H1 (cell line): ENCODE measurements at regions of chr7 and their contacts with region 1.

Region 1: GRCh38 chr7:74173866-74174605 is at the start of gene EIF4H:
- DNase-seq: peak; percentile 84 to 100
- H3K4me3 ChIP-seq: peak within 1 kb of the TSS; percentile 67 to 97 (median 80)
- H3K27ac ChIP-seq: peak within 1 kb of the TSS; percentile 94
- H3K4me1 ChIP-seq: peaks cover 2 to 14% (median 6%) of the 10 kb centered on the region in 4 experiments; a peak in 6 of 7 replicates
- H3K27me3 ChIP-seq: no peaks in the 10 kb centered on the region
- CTCF ChIP-seq: no peak; a peak in 1 of 4 replicates
- EP300 ChIP-seq: no peak
- POLR2A ChIP-seq: peak; percentile 91 to 95
- RAD21 ChIP-seq: no peak
- total RNA-seq, gene EIF4H: 359 and 382 TPM in 2 replicates

Region 2: DNA sequence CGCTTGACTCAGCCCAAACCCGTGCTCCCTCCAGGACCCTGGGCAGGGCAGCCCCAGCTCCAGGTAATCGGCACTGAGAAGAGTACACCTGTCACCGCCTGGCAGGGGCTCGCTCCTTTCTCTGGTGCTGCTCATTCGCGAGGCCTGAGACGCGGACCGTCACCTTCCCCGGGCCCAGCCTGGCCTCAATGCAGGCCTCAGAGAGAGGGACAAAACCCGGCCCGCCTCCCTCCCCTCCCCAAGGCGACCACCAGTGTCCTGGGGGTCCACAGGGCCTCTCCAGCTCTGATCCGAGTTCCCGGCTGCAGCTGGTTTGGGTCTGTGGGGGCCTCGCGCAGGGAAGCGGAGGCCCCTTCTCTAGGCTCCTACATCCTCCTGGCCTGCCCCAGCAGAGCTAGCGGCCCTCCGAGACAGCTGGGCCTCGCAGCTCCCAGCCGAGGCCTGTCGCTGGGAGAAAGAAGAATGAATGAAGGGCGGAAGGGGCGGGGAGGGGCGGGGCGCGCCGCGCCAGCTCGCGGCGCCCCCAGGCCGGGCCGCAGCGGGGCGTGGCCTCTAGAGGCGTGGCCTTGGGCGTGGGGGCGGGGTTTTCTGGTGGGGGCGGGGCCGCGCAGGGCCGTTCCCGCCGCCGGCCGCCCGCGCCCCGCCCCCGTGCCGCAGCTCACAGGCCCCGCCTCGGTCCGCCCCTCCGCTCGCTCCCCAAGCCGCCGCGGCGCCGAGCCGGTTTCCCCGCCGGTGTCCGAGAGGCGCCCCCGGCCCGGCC is 90.7 kb before region 1 on chr7 and contains the start of gene LIMK1:
- CTCF ChIA-PET with region 1: interaction called, 3 read pairs
- POLR2A ChIA-PET with region 1: interaction called, 18 read pairs
- DNase-seq: peak in 1 of 2 experiments; percentile 86
- H3K4me3 ChIP-seq: peak within 1 kb of the TSS; percentile 59 to 90 (median 64)
- H3K27ac ChIP-seq: peak within 1 kb of the TSS; percentile 3; the same call in 1 of the 2 replicates
- H3K4me1 ChIP-seq: peaks cover 0 to 20% (median 12%) of the 10 kb centered on the region in 4 experiments; a peak in 6 of 7 replicates
- H3K27me3 ChIP-seq: no peaks in the 10 kb centered on the region
- CTCF ChIP-seq: no peak
- EP300 ChIP-seq: no peak
- POLR2A ChIP-seq: peak in 1 of 2 experiments; percentile 44; a peak in 1 of 3 replicates
- RAD21 ChIP-seq: no peak
- total RNA-seq, gene LIMK1: 92.1 and 93.5 TPM in 2 replicates

Region 3: GRCh38 chr7:74141705-74142104 is 32.3 kb before region 1 on chr7:
- CTCF ChIA-PET with region 1: interaction called, 3 read pairs
- POLR2A ChIA-PET with region 1: interaction called, 24 read pairs
- DNase-seq: no peak
- H3K4me3 ChIP-seq: no peak overlapping the region
- H3K27ac ChIP-seq: no peak overlapping the region
- H3K4me1 ChIP-seq: peaks cover 0 to 10% (median 6%) of the 10 kb centered on the region in 4 experiments; a peak in 6 of 7 replicates
- H3K27me3 ChIP-seq: no peaks in the 10 kb centered on the region
- CTCF ChIP-seq: no peak
- EP300 ChIP-seq: no peak
- POLR2A ChIP-seq: no peak
- RAD21 ChIP-seq: no peak

Region 4: DNA sequence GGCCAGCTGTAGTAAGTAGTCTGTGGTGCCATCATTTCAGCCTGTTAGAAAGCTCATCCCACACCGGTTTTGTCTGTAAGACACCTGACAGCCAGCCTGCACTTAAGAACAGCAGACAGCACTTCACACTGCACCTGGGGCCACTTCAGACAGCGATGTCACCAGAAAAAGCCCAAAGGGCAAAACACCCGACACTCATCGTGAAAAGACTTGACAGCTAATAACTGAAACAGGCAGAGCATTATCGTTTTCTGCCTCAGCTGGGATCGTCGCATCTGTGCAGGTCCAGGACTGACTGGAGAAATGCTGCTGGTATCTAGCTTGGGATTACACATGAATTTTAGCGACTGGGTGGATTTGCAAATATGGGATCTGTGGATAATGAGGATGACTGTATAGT is 19.0 kb after region 1 on chr7:
- CTCF ChIA-PET with region 1: interaction called, 10 read pairs
- POLR2A ChIA-PET with region 1: interaction called, 65 read pairs
- DNase-seq: no peak
- H3K4me3 ChIP-seq: no peak overlapping the region
- H3K27ac ChIP-seq: no peak overlapping the region
- H3K4me1 ChIP-seq: no peaks in the 10 kb centered on the region
- H3K27me3 ChIP-seq: no peaks in the 10 kb centered on the region
- CTCF ChIP-seq: no peak
- EP300 ChIP-seq: no peak
- POLR2A ChIP-seq: no peak
- RAD21 ChIP-seq: no peak